ENCODE measurements at regions of chr12 and their contacts with region 1.

Region 1: GRCh38 chr12:82527165-82527780 is 159.4 kb upstream of the TMTC2 start:
- DNase-seq: no peak
- ATAC-seq: no peak
- H3K4me3 ChIP-seq: no peak overlapping the region
- H3K27ac ChIP-seq: no peak overlapping the region
- H3K4me1 ChIP-seq: no peaks in the 10 kb centered on the region
- H3K27me3 ChIP-seq: no peaks in the 10 kb centered on the region

Region 2: DNA sequence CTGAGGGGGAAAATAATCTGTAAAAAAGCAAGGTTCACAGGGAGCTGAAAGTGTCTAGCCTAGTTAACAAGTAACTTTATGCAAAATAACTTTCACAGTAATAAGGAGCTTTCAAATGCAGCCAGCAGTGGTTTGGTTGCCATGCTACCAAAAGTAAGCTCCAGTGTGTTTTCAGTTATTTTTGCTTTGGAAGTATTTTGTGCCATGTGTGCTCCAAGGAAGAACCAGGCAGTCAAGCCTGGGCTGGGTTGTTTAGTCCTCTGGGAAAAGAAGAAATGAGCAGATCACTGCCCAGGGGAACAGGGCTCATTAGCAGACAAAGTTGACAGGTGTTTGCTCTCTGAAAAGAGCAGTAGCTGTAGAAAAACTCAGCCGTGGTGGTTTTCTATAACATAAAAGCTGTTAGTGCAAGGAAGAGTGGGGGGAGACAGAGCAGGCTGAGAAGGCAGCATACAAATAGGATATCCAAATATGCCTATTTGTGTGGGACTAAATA is 66.7 kb after region 1 on chr12:
- intact Hi-C with region 1: no loop called
- DNase-seq: no peak
- ATAC-seq: no peak
- H3K4me3 ChIP-seq: no peak overlapping the region
- H3K27ac ChIP-seq: no peak overlapping the region
- H3K4me1 ChIP-seq: no peaks in the 10 kb centered on the region
- H3K27me3 ChIP-seq: no peaks in the 10 kb centered on the region

Region 3: DNA sequence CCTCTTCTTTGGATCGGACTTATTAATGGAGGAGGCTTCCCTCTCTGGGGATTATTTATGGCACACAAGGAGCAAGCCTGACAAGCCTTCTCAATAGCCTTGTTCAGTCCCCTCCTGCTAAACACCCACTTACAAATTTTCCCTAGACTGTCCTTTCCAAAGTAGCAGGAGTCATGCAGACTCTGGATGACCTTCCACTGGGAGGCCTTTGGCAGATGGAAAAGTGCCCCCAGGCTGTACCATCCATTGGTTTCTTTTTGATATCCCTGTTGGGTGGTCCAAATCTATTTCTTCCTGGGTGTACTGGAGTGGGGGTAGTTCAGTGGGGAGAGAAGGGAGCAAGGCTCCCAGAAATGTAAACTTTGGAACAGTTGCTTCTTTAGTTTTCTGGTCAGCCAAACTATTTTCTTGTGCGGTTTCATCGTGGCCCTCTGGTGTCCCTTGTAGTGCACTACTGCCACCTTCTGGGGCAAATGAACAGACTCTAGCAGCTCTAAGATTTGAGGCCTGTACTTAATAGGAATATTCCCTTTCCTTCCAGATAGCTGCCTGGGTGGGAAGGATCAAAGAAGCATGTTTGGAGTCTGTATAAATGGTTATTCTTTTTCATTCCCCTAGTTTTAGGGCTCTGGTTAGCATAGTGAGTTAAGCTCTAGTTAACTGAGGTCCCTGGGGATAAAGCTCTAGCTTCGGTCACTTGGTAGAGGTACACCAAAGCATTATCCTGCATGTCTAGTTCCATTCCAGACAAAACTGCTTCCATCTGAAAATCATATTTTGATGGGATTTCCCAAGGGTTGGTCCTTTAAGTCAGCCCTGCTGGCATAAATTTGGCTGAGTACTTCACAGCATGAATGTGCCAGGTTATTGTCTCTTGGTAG is 1975.9 kb after region 1 on chr12:
- intact Hi-C with region 1: loop called in 1 of 2 experiments (anchors 10 kb)
- DNase-seq: no peak
- ATAC-seq: peak; percentile 64
- H3K4me3 ChIP-seq: no peak overlapping the region
- H3K27ac ChIP-seq: no peak overlapping the region
- H3K4me1 ChIP-seq: no peaks in the 10 kb centered on the region
- H3K27me3 ChIP-seq: no peaks in the 10 kb centered on the region